Naive thymus-derived CD4-positive, alpha-beta T cell (primary cell): ENCODE measurements at regions of chr3 and their contacts with region 1.

Region 1: DNA sequence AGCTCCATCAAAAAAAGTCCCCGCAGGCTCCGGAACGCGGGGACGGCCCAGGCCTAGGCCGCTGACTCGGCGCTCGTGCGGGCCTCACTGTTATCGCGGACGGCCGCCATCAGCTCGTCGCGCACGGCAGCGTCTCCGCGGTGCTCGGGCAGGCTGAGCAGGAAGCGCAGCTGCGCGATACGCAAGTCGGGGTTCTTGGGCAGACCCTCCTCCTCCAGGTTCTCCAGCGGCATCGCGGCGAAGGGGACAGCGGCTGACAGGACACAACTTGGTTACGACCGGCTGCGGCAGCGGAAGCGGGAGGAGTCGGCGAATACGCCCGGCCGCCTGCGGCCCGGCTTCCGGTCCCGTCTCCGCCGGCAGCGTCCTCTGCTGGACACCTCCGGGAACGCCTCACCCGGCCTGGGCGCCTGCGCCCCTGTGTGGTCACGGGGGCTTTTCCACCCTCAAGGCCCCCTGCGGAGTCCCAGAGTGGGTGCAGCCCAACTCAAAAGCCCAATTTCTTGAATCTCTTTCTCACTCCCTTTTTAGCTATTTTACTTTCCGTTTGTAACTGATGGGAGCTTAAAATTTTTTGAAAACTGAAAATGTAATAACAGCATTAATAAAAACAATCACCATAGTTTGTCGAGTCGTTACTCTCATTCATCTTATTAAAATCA is at the start of gene PSMD6:
- DNase-seq: peak; percentile 87 to 98 (median 93)
- ATAC-seq: peak; percentile 99
- H3K4me3 ChIP-seq: peak within 1 kb of the TSS; percentile 74
- H3K4me3 Mint-ChIP-seq: peak within 1 kb of the TSS; percentile 86 to 92 (median 89)
- H3K27ac ChIP-seq: peak within 1 kb of the TSS; percentile 96
- H3K27ac Mint-ChIP-seq: peak within 1 kb of the TSS; percentile 72 to 95 (median 90)
- H3K4me1 ChIP-seq: peaks cover 17 to 19% of the 10 kb centered on the region in 2 donors
- H3K4me1 Mint-ChIP-seq: peaks cover 18 to 46% (median 40%) of the 10 kb centered on the region in 7 donors
- H3K27me3 ChIP-seq: no peaks in the 10 kb centered on the region
- H3K27me3 Mint-ChIP-seq: peaks cover 7 to 20% (median 16%) of the 10 kb centered on the region in 5 donors
- total RNA-seq, gene PSMD6: 63.4 to 103 (median 84.1) TPM

Region 2: DNA sequence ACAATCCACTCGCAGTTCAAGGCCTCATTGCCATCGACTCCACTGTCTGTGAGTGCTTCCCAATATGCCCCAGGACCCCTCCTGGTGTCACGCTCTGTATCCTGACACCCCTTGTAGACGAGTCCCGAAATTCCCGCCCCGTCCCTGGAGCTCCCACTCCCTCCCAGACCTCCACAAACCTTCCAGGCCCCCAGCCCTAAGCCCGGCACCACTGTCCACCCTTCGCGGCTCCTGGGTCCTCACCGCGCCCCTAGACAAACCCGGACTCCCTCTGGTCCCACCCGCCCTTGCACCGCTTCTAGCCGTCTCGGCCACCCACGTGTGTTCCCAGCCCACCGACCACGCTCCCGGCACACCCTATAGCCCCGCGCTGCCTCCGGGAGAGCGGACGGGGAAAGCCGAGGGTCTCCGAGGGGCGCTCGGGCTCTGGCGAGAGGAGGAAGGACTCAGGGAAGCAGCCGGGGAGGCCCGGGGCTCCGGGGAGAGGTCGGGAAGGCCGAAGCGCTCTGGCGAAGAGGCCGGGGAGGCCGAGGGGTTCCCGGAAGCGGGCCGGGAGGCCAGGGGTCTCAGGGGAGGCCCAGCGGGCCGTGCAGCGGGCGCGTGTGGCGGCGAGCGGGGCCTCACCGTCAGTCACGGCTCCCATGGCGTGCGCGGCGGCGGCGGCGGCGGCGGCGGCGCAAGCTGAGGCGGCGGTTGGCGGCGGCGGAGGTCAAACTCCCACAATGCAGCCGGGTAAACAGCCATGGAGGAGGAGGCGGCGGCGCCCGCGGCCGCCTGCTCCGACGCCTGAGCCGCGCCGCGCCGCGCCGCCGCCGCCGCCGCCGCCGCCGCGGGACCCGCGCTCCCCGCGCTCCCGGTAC is 159.9 kb before region 1 on chr3 and contains the starts of genes ATXN7 and THOC7:
- CTCF ChIA-PET with region 1: interaction called, 3 read pairs
- POLR2A ChIA-PET with region 1: interaction called, 3 read pairs
- intact Hi-C with region 1: loop called (anchors 1 to 2 kb)
- DNase-seq: peak; percentile 51 to 78 (median 74)
- ATAC-seq: peak; percentile 91
- H3K4me3 ChIP-seq: peak within 1 kb of the TSS; percentile 71
- H3K4me3 Mint-ChIP-seq: peak within 1 kb of the TSS; percentile 81 to 95 (median 93)
- H3K27ac ChIP-seq: peak within 1 kb of the TSS; percentile 84
- H3K27ac Mint-ChIP-seq: peak within 1 kb of the TSS; percentile 81 to 96 (median 93)
- H3K4me1 ChIP-seq: peaks cover 8 to 17% of the 10 kb centered on the region in 2 donors
- H3K4me1 Mint-ChIP-seq: peaks cover 39 to 74% (median 69%) of the 10 kb centered on the region in 7 donors
- H3K27me3 ChIP-seq: no peaks in the 10 kb centered on the region
- H3K27me3 Mint-ChIP-seq: no peaks in the 10 kb centered on the region
- total RNA-seq, gene ATXN7: 72.2 to 204 (median 160) TPM
- total RNA-seq, gene THOC7: 24.6 to 86.2 (median 38.7) TPM

Region 3: DNA sequence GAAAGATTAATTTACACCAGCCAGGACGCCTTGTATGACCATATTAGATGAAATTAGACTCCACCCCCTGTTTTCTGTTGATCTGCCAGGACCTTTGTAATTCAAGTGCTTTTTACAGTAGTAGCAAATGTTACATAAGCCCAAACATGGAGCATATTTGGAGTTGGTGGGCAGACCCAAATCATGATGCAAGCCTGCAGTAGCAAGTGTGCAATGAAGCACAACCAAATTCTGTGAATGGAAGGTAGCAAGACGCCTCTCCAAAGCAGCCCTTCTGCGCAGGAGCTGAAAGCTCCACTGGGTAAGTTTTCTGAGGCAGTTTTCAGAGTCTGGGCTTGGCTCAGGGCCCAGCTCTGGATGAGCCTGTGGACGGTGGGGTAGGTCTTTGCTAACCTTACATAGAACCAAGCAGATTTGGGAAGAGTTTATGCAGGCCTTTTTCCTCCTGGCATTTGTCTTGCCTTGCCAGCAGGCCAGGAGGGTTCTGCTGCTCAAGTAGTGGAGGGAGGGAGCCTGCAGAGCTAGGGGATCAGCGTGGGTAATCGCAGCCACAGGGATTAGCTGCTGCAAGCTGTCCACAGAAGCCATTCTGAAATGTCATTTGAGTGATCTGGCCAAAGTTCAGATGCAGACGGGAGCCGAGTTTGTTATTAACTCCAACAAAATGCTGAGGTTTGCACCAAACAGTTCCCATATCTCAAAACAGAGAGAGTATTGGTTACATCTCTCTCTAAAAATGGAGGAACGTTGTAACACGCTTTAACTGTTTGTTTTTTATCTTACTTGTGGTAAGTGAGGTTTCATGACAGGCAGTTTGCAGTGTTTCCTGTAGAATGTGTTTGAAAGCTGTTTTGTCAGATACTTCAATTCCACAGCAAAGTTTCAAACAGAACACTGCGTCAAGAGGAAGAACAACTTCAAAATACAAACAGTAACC is 55.4 kb before region 1 on chr3:
- CTCF ChIA-PET with region 1: interaction called, 12 read pairs
- POLR2A ChIA-PET with region 1: interaction called, 20 read pairs
- intact Hi-C with region 1: loop called (anchors 1 kb)
- DNase-seq: peak; percentile 14 to 93 (median 87)
- ATAC-seq: peak; percentile 88
- H3K4me3 ChIP-seq: peak overlapping the region; percentile 91
- H3K4me3 Mint-ChIP-seq: peak overlapping the region; percentile 86 to 98 (median 92)
- H3K27ac ChIP-seq: peak overlapping the region; percentile 80
- H3K27ac Mint-ChIP-seq: peak overlapping the region; percentile 92 to 99 (median 96)
- H3K4me1 ChIP-seq: peaks cover 46 to 48% of the 10 kb centered on the region in 2 donors
- H3K4me1 Mint-ChIP-seq: peaks cover 43 to 78% (median 65%) of the 10 kb centered on the region in 7 donors
- H3K27me3 ChIP-seq: no peaks in the 10 kb centered on the region
- H3K27me3 Mint-ChIP-seq: no peaks in the 10 kb centered on the region

Region 4: GRCh38 chr3:64011685-64012084 is 11.6 kb before region 1 on chr3:
- CTCF ChIA-PET with region 1: interaction called, 11 read pairs
- POLR2A ChIA-PET with region 1: interaction called, 9 read pairs
- intact Hi-C with region 1: loop called in 1 of 2 experiments (anchors 1 kb)
- DNase-seq: no peak
- ATAC-seq: no peak
- H3K4me3 ChIP-seq: no peak overlapping the region
- H3K4me3 Mint-ChIP-seq: no peak overlapping the region
- H3K27ac ChIP-seq: peak overlapping the region; percentile 22
- H3K27ac Mint-ChIP-seq: peak overlapping the region in 3 of 9 donors; percentile 38 to 72 (median 53)
- H3K4me1 ChIP-seq: no peaks in the 10 kb centered on the region
- H3K4me1 Mint-ChIP-seq: peaks cover 21 to 56% (median 34%) of the 10 kb centered on the region in 7 donors
- H3K27me3 ChIP-seq: no peaks in the 10 kb centered on the region
- H3K27me3 Mint-ChIP-seq: no peaks in the 10 kb centered on the region